Heart right ventricle (tissue), 16 donors: ENCODE measurements at regions of chr3 and their contacts with region 1.

Region 1: GRCh38 chr3:50890688-50891344 is 216.1 kb downstream of the DOCK3 start:
- DNase-seq: no peak
- ATAC-seq: no peak
- H3K4me3 ChIP-seq: no peak overlapping the region
- H3K27ac ChIP-seq: no peak overlapping the region
- H3K4me1 ChIP-seq: no peaks in the 10 kb centered on the region
- H3K27me3 ChIP-seq: no peaks in the 10 kb centered on the region
- CTCF ChIP-seq: no peak

Region 2: DNA sequence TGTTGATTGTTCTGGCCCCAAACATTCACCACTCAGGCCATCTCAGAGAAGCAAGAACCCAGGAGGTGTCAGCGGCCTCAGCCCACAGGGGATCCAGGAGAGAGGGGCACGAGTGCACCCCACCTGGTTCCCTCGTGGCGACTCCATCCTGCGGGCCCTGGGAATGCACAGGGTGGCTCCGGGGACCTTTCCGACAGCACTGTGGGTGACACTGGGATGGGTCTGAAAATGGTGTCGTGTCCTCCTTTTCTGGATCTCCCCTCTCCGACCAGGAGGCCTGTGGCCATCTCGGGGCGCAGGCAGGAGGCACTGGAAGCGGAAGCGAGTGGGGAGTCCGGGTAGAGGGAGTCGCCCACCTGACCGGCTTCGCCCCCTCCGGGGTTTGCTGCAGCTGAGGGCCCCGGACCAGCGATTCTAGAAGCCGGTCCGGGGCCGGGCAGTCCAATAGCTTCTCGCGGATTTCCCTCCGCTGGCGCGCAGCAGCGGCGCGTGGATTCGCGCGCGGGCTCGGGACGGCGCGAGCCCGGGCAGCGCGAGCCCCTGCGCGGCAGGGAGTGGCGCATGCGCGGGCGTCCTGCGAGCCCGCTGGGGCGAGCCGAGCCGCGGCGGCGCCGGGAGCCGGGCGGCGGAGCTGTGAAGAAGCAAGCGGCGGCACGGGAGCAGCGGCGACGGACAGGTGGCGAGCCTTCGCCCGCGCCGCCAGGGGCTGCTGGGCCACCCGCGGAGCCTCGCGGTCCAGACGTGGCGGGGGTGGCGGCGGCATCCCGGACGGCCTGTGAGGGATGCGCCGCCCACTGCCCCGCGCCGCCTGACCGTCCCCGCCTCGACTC is 216.3 kb before region 1 on chr3 and contains the start of gene DOCK3:
- intact Hi-C with region 1: loop called in 1 of 10 experiments (anchors 10 kb)
- DNase-seq: peak; percentile 23 to 69
- ATAC-seq: peak; percentile 77 to 93 (median 87)
- H3K4me3 ChIP-seq: peak within 1 kb of the TSS in 9 of 10 donors; percentile 39 to 57 (median 51)
- H3K27ac ChIP-seq: no peak within 1 kb of the TSS
- H3K4me1 ChIP-seq: peaks cover 0 to 16% (median 5%) of the 10 kb centered on the region in 9 donors
- H3K27me3 ChIP-seq: peaks cover 3 to 72% (median 56%) of the 10 kb centered on the region in 7 donors
- CTCF ChIP-seq: no peak
- total RNA-seq, gene DOCK3: 4.3 to 6.6 (median 4.7) TPM